ENCODE measurements at regions of chr1 and their contacts with region 1.

Region 1: DNA sequence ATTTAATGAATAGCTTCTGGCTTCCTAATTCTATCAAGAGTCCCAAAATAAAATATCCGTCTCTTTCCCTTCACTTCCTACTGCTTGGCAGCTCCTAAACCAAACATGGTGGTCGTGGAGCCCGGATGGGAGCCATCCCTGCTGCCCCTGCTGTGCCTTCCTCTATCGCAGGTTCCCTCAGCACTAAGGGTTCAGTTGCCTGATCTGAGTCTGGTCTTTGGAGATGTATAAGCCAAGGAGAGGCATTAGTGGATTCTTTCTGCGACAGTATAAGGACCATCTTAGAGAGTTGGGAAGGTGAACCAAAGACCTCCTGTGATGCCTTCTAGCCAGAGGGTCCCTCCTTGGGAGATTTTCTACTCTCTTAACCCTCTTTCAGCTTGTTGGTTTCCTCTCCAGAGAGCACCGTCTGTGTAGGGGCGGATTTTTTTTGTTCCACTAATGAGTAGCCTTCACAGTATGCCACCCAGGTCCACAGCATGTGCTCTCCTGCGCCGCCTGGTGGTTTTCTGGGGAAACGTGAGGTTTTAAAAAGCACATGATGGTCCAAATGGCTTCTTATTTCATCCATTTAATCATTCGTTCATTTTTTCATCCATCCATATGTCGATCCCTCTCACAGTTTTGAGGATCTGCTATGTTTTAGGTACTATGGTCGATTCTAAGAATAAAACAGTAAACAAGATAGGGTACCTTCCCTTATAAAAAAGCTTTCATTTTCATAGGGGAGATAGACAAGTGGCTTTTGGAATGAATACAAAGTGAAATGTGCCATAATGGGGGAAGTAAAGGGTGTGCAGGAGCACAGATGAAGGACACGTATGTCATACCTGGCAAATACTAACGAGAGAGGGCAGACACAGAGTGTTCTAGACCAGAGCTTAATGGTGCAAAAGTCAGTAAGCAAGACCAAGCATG is 71.0 kb downstream of the NFASC start:
- DNase-seq: peak; percentile 82
- H3K4me3 Mint-ChIP-seq: no peak overlapping the region
- H3K27ac Mint-ChIP-seq: no peak overlapping the region
- H3K4me1 Mint-ChIP-seq: no peaks in the 10 kb centered on the region
- H3K27me3 Mint-ChIP-seq: peaks cover 10% of the 10 kb centered on the region
- CTCF ChIP-seq: peak; percentile 95

Region 2: DNA sequence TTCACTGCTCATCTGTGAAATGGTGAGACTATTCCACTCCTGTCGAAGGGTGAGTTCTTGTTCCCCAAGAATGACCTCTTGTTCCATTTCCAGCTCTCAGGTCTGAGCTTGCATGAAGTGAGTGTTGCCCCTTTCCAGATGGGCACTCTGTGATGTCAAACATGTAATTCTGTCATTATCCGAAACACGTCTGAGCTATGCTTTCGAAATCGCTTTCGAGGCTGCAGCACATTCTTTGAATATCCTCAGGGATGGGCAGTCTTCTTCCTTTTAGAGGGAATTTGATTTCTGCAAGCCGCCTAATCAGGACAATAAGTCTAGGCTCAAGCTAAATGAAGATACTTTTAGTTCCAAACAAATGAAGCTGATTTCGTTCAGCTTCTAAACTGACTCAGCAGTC is 55.9 kb before region 1 on chr1:
- CTCF ChIA-PET with region 1: interaction called, 10 read pairs
- POLR2A ChIA-PET with region 1: no interaction called
- intact Hi-C with region 1: loop called (anchors 1 kb)
- DNase-seq: peak; percentile 47
- H3K4me3 Mint-ChIP-seq: no peak overlapping the region
- H3K27ac Mint-ChIP-seq: no peak overlapping the region
- H3K4me1 Mint-ChIP-seq: no peaks in the 10 kb centered on the region
- H3K27me3 Mint-ChIP-seq: peaks cover 21% of the 10 kb centered on the region
- CTCF ChIP-seq: no peak

Region 3: DNA sequence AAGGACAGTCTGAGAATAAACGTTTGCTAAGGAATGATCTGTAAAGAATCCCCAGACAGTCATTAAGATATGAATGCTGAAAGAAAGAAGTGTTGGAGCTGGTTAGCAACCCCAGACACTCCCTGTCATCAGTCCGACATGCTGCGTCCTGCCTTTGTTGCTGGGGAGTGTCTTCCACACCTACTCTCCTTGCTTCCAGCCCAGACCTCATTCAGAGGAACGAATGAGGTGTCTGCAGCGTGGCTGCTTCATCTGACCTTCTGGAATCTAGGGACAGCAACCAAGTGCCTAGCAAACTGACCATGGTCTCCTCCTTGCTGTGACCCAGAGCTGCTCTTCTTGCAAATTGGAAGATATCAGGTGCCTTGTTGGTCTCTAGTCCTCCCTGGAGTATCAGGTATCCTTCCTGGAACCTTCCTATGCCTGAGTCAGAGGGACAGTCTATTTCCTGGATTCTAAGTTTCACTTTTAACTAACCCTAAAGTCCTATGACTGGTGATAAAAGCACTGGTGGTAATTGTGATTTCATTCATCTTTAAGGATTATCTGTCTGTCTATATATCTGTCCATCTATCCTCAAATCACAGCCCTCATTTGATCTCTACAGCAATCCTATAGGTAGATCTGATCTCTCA is 25.7 kb before region 1 on chr1:
- CTCF ChIA-PET with region 1: interaction called, 17 read pairs
- POLR2A ChIA-PET with region 1: no interaction called
- intact Hi-C with region 1: no loop called
- DNase-seq: peak; percentile 77
- H3K4me3 Mint-ChIP-seq: peak overlapping the region; percentile 32
- H3K27ac Mint-ChIP-seq: peak overlapping the region; percentile 7
- H3K4me1 Mint-ChIP-seq: peaks cover 13% of the 10 kb centered on the region
- H3K27me3 Mint-ChIP-seq: no peaks in the 10 kb centered on the region
- CTCF ChIP-seq: no peak

Region 4: DNA sequence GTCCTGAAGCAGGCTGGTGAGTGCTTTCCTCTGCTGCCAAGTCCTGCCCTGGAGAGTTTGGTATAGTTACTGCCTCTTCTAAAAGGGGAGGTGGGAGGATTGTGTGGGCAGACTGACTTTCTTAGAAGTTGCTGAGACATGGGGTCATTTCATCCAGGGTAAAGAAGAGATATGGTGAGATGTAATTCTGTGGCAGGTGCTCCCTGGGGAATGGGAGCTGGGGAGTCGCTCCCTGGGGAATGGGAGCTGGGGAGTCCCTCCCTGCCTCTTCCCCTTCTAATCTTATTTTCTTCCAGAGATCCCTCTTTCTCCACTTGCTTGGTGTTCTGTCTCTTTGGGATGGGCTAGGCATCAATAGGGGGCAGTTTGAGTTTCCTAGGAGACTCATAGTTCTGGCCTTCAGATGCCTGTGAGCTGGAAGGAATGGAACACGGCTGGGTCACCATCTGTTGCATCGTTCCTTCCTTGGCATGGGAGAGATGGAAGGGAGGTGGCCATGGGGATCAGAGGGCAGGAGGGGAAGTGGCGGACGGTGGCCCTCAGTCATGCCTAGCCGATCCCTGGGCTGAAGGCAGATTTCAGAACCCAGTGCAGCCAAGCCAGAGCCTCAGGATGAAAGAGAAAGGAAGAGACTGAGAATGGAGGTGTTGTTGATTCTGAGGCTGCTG is 12.1 kb before region 1 on chr1:
- CTCF ChIA-PET with region 1: interaction called, 35 read pairs
- POLR2A ChIA-PET with region 1: interaction called, 3 read pairs
- intact Hi-C with region 1: no loop called
- DNase-seq: no peak
- H3K4me3 Mint-ChIP-seq: no peak overlapping the region
- H3K27ac Mint-ChIP-seq: no peak overlapping the region
- H3K4me1 Mint-ChIP-seq: peaks cover under 1% of the 10 kb centered on the region
- H3K27me3 Mint-ChIP-seq: no peaks in the 10 kb centered on the region
- CTCF ChIP-seq: no peak

Region 5: GRCh38 chr1:204975570-204976235 is 34.0 kb after region 1 on chr1:
- CTCF ChIA-PET with region 1: interaction called, 13 read pairs
- POLR2A ChIA-PET with region 1: no interaction called
- intact Hi-C with region 1: no loop called
- DNase-seq: peak; percentile 78
- H3K4me3 Mint-ChIP-seq: no peak overlapping the region
- H3K27ac Mint-ChIP-seq: no peak overlapping the region
- H3K4me1 Mint-ChIP-seq: peaks cover 8% of the 10 kb centered on the region
- H3K27me3 Mint-ChIP-seq: peaks cover 58% of the 10 kb centered on the region
- CTCF ChIP-seq: peak; percentile 99

Region 6: GRCh38 chr1:205032508-205032907 is 90.8 kb after region 1 on chr1:
- CTCF ChIA-PET with region 1: no interaction called
- POLR2A ChIA-PET with region 1: no interaction called
- intact Hi-C with region 1: no loop called
- DNase-seq: no peak
- H3K4me3 Mint-ChIP-seq: no peak overlapping the region
- H3K27ac Mint-ChIP-seq: no peak overlapping the region
- H3K4me1 Mint-ChIP-seq: no peaks in the 10 kb centered on the region
- H3K27me3 Mint-ChIP-seq: peaks cover 85% of the 10 kb centered on the region
- CTCF ChIP-seq: no peak